Mucosa of descending colon (tissue), 3 donors: ENCODE measurements at regions of chr1 and their contacts with region 1.

Region 1: GRCh38 chr1:212477014-212477679 is 44.4 kb downstream of the NENF start:
- DNase-seq: peak; percentile 69 to 92 (median 83)
- ATAC-seq: peak; percentile 92
- H3K4me3 ChIP-seq: no peak overlapping the region
- H3K4me1 ChIP-seq: peaks cover 10% of the 10 kb centered on the region
- CTCF ChIP-seq: peak; percentile 90

Region 2: GRCh38 chr1:212609701-212610468 is 132.7 kb after region 1 on chr1:
- intact Hi-C with region 1: loop called in 1 of 2 experiments (anchors 10 kb)
- DNase-seq: no peak
- ATAC-seq: no peak
- H3K4me3 ChIP-seq: peak overlapping the region; percentile 43
- H3K4me1 ChIP-seq: peaks cover 19% of the 10 kb centered on the region
- CTCF ChIP-seq: no peak